AG04450 (cell line): ENCODE measurements at regions of chr4 and their contacts with region 1.

Region 1: DNA sequence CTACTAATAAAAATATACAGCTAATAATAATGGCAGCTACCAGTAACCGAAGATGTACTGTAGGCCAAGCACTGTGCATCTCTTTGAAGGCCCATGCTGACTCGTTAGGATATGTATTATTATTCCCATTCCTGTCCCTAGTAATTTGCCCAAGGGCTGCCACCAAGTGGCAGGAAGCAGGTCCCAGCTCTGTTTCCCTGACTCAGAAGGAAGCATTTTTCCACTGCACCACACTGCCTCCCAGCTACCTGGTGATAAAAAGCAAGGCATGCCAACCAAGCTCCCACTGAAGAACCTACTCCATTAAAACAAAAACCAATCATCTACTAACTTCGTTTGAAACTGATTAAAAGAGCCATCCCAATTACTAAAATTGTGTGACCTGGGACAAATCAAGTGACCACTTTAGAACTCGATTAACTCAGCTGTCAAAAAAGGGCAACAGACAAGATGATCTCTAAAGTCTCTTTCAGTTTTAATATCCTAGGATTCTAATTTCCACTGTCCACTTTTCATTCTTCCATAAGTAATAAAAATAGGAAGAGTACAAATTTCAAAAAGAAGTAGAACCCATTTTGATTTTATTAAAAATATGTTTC is 24.3 kb upstream of the PGM2 start:
- DNase-seq: no peak
- H3K4me3 ChIP-seq: no peak overlapping the region
- H3K27ac ChIP-seq: no peak overlapping the region
- H3K27me3 ChIP-seq: peaks cover 5% of the 10 kb centered on the region
- CTCF ChIP-seq: peak; percentile 51

Region 2: DNA sequence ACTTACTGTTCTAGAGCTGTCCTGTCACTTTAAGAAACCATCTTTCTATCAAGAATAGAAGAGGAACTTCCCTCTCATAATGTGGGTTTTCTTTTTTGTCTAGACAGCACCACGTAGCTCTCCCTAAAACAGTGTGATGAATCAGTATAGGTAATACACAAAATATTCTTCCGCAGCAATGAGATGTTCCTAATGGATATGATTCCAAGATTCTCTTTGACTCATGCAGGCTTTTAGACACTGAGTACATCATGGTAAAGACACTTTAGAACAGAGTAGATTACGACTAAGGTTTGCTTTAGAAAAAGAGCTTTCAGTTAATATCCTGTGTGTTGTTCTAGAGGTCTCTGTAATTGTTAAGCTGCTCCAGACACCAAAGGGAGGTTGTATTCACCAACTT is 227.9 kb after region 1 on chr4:
- CTCF ChIA-PET with region 1: interaction called, 85 read pairs
- POLR2A ChIA-PET with region 1: no interaction called
- DNase-seq: no peak
- H3K4me3 ChIP-seq: no peak overlapping the region
- H3K27ac ChIP-seq: no peak overlapping the region
- H3K27me3 ChIP-seq: no peaks in the 10 kb centered on the region
- CTCF ChIP-seq: no peak